Activated CD4-positive, alpha-beta memory T cell treated with anti-CD3 and anti-CD28 coated beads for 36 hours (primary cell): ENCODE measurements at regions of chr3 and their contacts with region 1.

Region 1: DNA sequence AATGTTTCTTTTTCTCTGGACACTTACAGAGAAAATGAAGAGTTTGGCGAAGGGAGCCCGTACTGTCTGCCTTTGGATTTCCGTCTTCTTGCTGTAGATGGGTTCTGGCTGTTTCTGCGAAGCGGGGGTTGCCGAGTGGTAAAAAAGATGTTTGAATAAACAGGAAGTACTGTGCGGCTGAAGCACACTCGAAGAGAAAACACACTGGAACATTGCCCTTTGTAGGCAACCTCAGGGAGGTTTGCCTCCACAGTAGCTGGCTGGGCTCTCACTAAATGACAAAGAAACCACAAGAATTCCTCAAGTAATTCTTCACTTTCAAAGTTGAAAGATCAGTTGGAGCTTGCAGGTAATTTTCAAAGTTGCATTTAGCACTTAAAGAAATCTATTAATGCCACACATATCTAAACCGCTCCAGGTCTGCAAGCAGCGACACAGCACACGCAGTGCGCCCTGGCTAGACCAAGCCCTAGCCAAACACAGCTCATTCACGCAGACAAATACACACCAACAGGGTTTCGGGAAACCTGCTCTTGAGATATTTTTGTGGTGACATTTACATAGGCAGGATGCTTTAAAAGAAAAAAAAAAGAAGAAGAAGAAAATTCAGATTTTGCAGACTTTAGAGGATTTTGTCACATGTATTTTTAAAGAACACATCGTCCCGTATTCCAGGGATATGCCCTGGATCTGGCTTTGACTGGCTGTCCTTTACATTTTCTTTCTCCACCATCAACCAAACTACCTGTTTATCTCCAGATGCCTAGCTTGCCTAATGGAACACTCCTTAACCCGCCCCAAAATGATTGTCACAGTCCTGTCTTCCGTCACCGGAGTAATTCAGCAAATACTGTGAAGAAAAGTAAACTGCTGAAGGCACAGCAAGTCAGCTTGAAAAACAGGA is 452.8 kb downstream of the FOXP1 start:
- DNase-seq: peak; percentile 81
- H3K4me3 Mint-ChIP-seq: peak overlapping the region; percentile 93
- H3K27ac Mint-ChIP-seq: peak overlapping the region; percentile 94
- H3K4me1 Mint-ChIP-seq: peaks cover 68% of the 10 kb centered on the region
- H3K27me3 Mint-ChIP-seq: no peaks in the 10 kb centered on the region

Region 2: DNA sequence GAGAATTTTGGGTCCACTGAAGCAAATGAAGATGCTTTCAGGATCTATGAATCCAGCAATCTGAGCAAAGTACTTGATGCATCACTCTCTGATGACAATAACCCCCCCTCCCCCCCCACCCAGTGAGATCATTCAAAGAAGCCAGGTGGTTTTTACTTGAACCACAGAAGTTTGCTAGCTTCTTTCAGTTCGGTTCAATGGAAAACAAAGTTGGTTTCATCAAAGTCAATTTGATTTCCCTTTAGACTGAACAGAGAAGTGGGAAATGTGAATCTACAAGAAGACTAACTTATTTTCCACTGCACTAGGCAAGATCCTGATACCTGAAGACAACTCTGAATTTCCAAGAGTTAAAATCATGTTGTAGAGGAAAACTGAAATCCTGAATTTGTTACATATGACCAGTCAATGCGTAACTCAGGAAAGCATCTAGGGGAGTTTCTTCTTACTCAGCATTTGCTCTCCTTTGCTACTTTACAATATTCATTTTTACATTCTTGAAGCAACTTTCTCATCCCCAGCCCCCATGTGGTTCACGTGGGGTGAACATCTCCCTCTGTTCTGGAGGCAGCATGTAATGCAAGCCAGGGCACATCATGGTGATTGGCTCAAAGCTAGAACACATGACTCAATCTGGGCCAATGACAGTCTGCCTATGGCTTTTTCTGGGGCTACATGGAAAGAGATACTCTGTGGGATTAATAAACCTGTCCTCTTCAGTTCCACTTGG is 119.8 kb before region 1 on chr3:
- CTCF ChIA-PET with region 1: no interaction called
- POLR2A ChIA-PET with region 1: no interaction called
- intact Hi-C with region 1: loop called (anchors 1 kb)
- DNase-seq: peak; percentile 87
- H3K4me3 Mint-ChIP-seq: peak overlapping the region; percentile 56
- H3K27ac Mint-ChIP-seq: peak overlapping the region; percentile 92
- H3K4me1 Mint-ChIP-seq: peaks cover 68% of the 10 kb centered on the region
- H3K27me3 Mint-ChIP-seq: no peaks in the 10 kb centered on the region

Region 3: DNA sequence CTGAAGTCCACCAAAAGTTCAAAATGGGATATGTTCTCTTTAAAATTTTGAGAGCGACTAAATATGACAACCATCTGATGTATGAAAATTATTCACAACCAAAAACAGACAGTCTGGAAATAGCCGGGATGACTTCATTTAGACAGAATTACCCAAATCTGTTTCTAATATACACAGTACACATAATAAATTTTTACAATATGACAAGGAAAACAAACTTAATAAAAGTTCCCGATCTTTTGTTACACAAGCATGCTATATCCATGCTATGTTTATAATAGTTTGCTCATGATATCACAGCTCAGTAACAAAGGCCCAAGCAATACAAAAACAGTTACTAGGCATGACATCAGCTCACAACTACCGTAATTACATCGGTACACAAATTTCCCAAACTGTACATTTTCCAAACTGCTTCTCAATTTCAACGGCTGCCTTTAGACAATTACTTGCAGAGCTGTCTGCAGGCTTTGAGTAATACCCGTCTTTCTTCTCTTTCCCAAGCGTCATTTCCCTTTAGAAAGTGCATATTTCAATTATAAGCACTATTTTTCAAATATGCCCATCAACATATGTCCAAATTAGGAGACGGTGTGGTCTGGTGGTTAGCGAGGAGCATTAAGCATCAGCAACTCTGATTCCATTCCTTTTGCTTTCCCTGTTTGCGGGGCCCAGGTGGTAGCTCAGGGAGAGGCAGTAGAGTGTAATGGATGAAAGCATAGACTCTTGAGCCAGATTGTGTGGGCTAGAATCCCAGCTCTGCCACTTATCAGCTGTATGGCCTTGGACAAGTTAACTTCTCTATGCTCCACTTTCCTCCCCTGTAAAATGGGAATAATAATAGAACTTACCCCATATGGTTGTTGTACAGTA is 28.4 kb before region 1 on chr3:
- CTCF ChIA-PET with region 1: no interaction called
- POLR2A ChIA-PET with region 1: interaction called, 9 read pairs
- intact Hi-C with region 1: loop called (anchors 1 kb)
- DNase-seq: no peak
- H3K4me3 Mint-ChIP-seq: peak overlapping the region; percentile 41
- H3K27ac Mint-ChIP-seq: peak overlapping the region; percentile 89
- H3K4me1 Mint-ChIP-seq: peaks cover 80% of the 10 kb centered on the region
- H3K27me3 Mint-ChIP-seq: no peaks in the 10 kb centered on the region

Region 4: GRCh38 chr3:71149959-71150954 is 19.5 kb after region 1 on chr3:
- CTCF ChIA-PET with region 1: no interaction called
- POLR2A ChIA-PET with region 1: no interaction called
- intact Hi-C with region 1: loop called (anchors 1 kb)
- DNase-seq: no peak
- H3K4me3 Mint-ChIP-seq: peak overlapping the region; percentile 15
- H3K27ac Mint-ChIP-seq: peak overlapping the region; percentile 52
- H3K4me1 Mint-ChIP-seq: peaks cover 43% of the 10 kb centered on the region
- H3K27me3 Mint-ChIP-seq: no peaks in the 10 kb centered on the region

Region 5: DNA sequence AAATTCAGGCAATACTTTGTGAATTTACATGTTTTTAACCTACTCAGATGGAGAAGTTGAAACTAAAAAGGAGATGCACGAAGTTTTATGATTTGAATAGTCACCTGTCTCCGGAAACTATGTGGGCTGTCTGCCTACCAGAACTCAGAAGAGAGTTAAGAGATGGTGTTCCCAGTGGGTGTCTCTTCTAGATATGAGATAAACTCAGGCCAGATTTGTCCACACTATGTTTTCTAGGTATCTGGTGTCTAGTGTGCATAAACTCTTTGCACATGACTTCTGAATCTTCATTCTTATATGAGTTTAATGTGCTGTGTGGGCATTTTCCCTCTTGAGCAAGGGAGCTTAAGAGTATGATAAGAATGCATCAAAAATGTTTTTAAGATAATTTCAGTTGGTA is 230.0 kb after region 1 on chr3:
- CTCF ChIA-PET with region 1: no interaction called
- POLR2A ChIA-PET with region 1: interaction called, 5 read pairs
- intact Hi-C with region 1: loop called (anchors 5 kb)
- DNase-seq: peak; percentile 52
- H3K4me3 Mint-ChIP-seq: peak overlapping the region; percentile 39
- H3K27ac Mint-ChIP-seq: peak overlapping the region; percentile 89
- H3K4me1 Mint-ChIP-seq: peaks cover 76% of the 10 kb centered on the region
- H3K27me3 Mint-ChIP-seq: no peaks in the 10 kb centered on the region

Region 6: DNA sequence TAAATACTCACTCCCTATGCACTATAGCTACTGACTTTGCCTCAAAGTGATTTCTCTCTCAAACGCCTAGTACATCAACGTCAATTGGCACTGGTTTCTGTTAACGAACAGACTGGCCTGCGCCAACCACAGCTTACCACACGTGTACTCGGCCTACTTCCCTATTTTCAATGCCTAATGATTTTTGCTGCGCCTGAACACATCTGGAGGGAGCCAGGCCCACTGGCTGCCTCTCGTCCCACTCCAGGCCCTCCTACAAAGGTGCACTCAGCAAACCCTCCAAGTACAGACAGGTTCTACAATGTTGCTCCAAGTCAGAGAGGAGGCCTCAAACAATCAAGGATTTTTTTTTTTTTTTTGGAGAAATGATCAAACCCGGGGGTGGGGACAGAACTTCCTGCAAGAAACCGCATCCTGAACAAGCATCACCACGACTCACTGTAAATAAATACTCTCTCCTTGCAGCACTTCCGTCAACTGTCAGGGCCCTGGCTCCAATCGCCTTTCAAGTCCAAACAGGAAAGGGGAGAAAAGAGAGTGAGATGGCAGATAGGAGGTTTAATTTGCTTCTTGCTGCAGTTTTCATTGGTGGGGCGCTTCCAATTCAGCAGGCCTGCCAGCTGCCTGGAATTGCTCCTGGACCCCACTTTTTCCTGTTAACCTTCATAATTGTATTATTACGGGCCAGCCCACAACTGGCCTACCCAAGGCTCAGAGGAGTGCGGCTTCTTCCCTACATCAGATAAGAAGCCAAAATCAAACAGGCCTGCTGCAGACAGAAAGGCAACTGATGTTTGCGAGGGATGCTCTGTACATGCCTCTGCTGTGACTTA is 313.5 kb after region 1 on chr3:
- CTCF ChIA-PET with region 1: no interaction called
- POLR2A ChIA-PET with region 1: interaction called, 3 read pairs
- intact Hi-C with region 1: loop called (anchors 5 kb)
- DNase-seq: peak; percentile 79
- H3K4me3 Mint-ChIP-seq: peak overlapping the region; percentile 65
- H3K27ac Mint-ChIP-seq: peak overlapping the region; percentile 95
- H3K4me1 Mint-ChIP-seq: peaks cover 87% of the 10 kb centered on the region
- H3K27me3 Mint-ChIP-seq: no peaks in the 10 kb centered on the region

Region 7: DNA sequence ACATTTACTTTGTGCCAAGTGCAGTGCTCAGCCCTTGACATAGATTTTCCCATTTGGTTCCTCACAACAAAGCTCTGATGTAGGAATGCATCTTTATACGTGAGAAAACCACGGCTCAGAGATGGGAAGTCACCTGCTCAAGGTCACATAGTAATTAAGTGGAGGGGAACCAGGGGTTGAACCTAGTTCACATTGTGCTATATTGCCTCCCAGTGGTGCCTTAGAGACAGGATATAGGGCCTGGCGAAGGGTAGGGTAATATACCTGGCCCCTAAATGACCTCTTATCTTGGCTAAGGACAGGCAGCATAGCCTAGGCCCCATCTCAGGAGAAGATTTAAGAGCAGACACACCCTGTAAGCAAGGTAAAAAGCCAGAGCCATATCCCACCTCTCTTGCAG is 381.3 kb after region 1 on chr3:
- CTCF ChIA-PET with region 1: no interaction called
- POLR2A ChIA-PET with region 1: interaction called, 3 read pairs
- intact Hi-C with region 1: loop called (anchors 5 kb)
- DNase-seq: peak; percentile 46
- H3K4me3 Mint-ChIP-seq: no peak overlapping the region
- H3K27ac Mint-ChIP-seq: no peak overlapping the region
- H3K4me1 Mint-ChIP-seq: peaks cover 6% of the 10 kb centered on the region
- H3K27me3 Mint-ChIP-seq: no peaks in the 10 kb centered on the region